Dorsolateral prefrontal cortex (tissue), 120 donors: ENCODE measurements at regions of chr2 and their contacts with region 1.

Region 1: GRCh38 chr2:9112079-9112721 is 94.4 kb upstream of the ASAP2 start:
- DNase-seq: peak in 7 of 10 donors; percentile 61 to 92 (median 70)
- H3K4me3 ChIP-seq: no peak overlapping the region
- H3K27ac ChIP-seq: peak overlapping the region in 3 of 59 donors; percentile 6 to 11 (median 8)
- H3K27me3 ChIP-seq: no peaks in the 10 kb centered on the region
- CTCF ChIP-seq: no peak

Region 2: GRCh38 chr2:8860239-8860638 is 252.0 kb before region 1 on chr2:
- intact Hi-C with region 1: loop called in 1 of 2 experiments (anchors 10 kb)
- DNase-seq: no peak
- H3K4me3 ChIP-seq: no peak overlapping the region
- H3K27ac ChIP-seq: no peak overlapping the region
- H3K27me3 ChIP-seq: no peaks in the 10 kb centered on the region
- CTCF ChIP-seq: no peak

Region 3: GRCh38 chr2:9251154-9252001 is 139.2 kb after region 1 on chr2:
- intact Hi-C with region 1: no loop called
- DNase-seq: no peak
- H3K4me3 ChIP-seq: no peak overlapping the region
- H3K27ac ChIP-seq: no peak overlapping the region
- H3K27me3 ChIP-seq: no peaks in the 10 kb centered on the region
- CTCF ChIP-seq: no peak